ENCODE measurements at regions of chr9 and their contacts with region 1.

Region 1: DNA sequence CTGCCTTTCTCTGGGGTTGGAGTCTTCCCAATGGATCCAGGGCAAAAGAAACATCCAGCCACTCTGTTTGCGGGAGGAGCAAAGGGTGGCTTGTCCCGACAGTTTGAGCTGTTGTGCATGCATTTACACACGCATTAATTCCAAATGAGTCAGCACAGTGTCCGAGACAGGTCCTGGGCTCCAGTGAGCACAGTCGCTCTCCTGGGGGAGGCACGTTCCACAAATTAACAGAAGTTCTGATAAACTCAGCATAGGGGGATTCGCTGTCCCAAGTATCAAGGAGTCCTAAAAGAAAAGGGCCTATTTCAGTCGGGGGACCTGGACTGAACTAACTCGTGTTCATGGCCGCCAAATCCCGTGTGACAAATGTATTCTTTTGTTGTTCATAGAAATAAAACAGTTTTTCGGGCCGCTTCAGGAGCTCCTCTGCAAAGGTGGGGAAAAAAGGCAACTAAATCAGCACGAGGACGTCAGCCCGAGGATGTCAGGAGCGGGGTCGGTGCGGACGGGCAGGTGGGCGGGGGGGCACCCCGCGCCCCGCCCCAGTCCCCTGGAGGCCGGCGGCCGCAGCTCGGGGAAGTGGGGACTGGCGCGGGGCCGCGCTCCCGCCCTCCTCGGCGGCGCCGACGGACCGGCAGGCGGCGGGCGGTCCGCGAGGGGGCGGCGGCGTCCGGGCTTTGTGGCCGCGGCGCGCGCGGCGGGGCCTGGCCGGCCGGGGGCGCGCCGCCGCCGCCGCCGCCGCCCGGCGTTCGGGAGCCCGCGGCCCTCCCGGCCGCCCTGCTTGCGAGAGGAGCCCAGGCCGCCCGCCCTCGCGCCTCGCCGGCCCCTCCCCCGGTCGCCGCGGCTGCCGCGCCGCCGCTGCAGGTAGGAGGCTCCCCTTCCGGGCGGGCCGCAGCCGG is at the start of gene MSANTD3:
- DNase-seq: peak; percentile 22 to 67 (median 44)
- ATAC-seq: peak; percentile 87
- H3K4me3 ChIP-seq: peak within 1 kb of the TSS; percentile 73
- H3K4me3 Mint-ChIP-seq: peak within 1 kb of the TSS; percentile 90 to 99 (median 96)
- H3K27ac ChIP-seq: peak within 1 kb of the TSS; percentile 68
- H3K27ac Mint-ChIP-seq: peak within 1 kb of the TSS; percentile 84 to 98 (median 93)
- H3K4me1 ChIP-seq: peaks cover 7 to 8% of the 10 kb centered on the region in 2 donors
- H3K4me1 Mint-ChIP-seq: peaks cover 22 to 48% (median 42%) of the 10 kb centered on the region in 7 donors
- H3K27me3 ChIP-seq: no peaks in the 10 kb centered on the region
- H3K27me3 Mint-ChIP-seq: peaks cover 0 to 18% (median 2%) of the 10 kb centered on the region in 5 donors
- total RNA-seq, gene MSANTD3: 6.8 to 13.4 (median 12.0) TPM

Region 2: GRCh38 chr9:100411472-100412283 is 15.1 kb before region 1 on chr9:
- CTCF ChIA-PET with region 1: interaction called, 3 read pairs
- POLR2A ChIA-PET with region 1: interaction called, 7 read pairs
- intact Hi-C with region 1: loop called (anchors 1 kb)
- DNase-seq: peak; percentile 58 to 87 (median 80)
- ATAC-seq: peak; percentile 100
- H3K4me3 ChIP-seq: peak overlapping the region; percentile 91
- H3K4me3 Mint-ChIP-seq: peak overlapping the region; percentile 83 to 98 (median 89)
- H3K27ac ChIP-seq: peak overlapping the region; percentile 55
- H3K27ac Mint-ChIP-seq: peak overlapping the region; percentile 56 to 90 (median 84)
- H3K4me1 ChIP-seq: peaks cover 10 to 15% of the 10 kb centered on the region in 2 donors
- H3K4me1 Mint-ChIP-seq: peaks cover 10 to 16% (median 13%) of the 10 kb centered on the region in 7 donors
- H3K27me3 ChIP-seq: no peaks in the 10 kb centered on the region
- H3K27me3 Mint-ChIP-seq: peaks cover 6 to 21% (median 15%) of the 10 kb centered on the region in 5 donors